Activated T-helper 2 cell treated with anti-CD3 and anti-CD28 coated beads, Interferon-gamma antibody, Interleukin-2, Interleukin-4, amounts not matched to agents 10 μg/mL and 5 μg/mL and 100 μg/mL, durations not matched to agents 14 hours and 24 hours and 36 hours (primary cell): ENCODE measurements at regions of chr1 and their contacts with region 1.

Region 1: GRCh38 chr1:192580351-192580962 is 4.9 kb downstream of the RGS1 start:
- DNase-seq: no peak
- H3K4me3 Mint-ChIP-seq: peak overlapping the region; percentile 7
- H3K27ac Mint-ChIP-seq: no peak overlapping the region
- H3K4me1 Mint-ChIP-seq: peaks cover 39% of the 10 kb centered on the region
- H3K27me3 Mint-ChIP-seq: peaks cover 8% of the 10 kb centered on the region

Region 2: DNA sequence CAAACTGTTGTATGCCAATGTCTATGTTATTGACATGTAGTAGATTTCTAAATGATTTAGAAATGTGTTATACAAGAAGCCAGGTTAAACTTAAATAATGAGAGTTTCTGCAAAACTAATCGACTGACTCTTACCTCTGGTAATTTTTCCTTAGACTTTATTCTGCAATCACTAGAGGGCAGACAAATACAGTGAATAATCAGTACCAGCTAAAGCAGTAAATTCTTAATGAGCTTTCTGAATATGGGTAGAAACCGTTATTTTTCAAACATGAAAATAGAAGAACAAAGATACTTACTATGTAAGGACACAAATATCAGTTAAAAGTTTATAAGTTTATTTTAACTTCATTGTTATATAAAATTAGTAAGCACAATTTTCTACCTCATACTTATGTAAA is 102.8 kb before region 1 on chr1:
- intact Hi-C with region 1: loop called (anchors 1 kb)
- DNase-seq: no peak
- H3K4me3 Mint-ChIP-seq: no peak overlapping the region
- H3K27ac Mint-ChIP-seq: no peak overlapping the region
- H3K4me1 Mint-ChIP-seq: peaks cover 3% of the 10 kb centered on the region
- H3K27me3 Mint-ChIP-seq: peaks cover 12% of the 10 kb centered on the region

Region 3: GRCh38 chr1:192530254-192530653 is 50.2 kb before region 1 on chr1:
- intact Hi-C with region 1: loop called (anchors 1 kb)
- DNase-seq: no peak
- H3K4me3 Mint-ChIP-seq: peak overlapping the region; percentile 9
- H3K27ac Mint-ChIP-seq: no peak overlapping the region
- H3K4me1 Mint-ChIP-seq: peaks cover 39% of the 10 kb centered on the region
- H3K27me3 Mint-ChIP-seq: peaks cover 9% of the 10 kb centered on the region

Region 4: GRCh38 chr1:192545896-192546521 is 34.4 kb before region 1 on chr1:
- intact Hi-C with region 1: loop called (anchors 1 kb)
- DNase-seq: no peak
- H3K4me3 Mint-ChIP-seq: no peak overlapping the region
- H3K27ac Mint-ChIP-seq: peak overlapping the region; percentile 1
- H3K4me1 Mint-ChIP-seq: peaks cover 64% of the 10 kb centered on the region
- H3K27me3 Mint-ChIP-seq: no peaks in the 10 kb centered on the region

Region 5: DNA sequence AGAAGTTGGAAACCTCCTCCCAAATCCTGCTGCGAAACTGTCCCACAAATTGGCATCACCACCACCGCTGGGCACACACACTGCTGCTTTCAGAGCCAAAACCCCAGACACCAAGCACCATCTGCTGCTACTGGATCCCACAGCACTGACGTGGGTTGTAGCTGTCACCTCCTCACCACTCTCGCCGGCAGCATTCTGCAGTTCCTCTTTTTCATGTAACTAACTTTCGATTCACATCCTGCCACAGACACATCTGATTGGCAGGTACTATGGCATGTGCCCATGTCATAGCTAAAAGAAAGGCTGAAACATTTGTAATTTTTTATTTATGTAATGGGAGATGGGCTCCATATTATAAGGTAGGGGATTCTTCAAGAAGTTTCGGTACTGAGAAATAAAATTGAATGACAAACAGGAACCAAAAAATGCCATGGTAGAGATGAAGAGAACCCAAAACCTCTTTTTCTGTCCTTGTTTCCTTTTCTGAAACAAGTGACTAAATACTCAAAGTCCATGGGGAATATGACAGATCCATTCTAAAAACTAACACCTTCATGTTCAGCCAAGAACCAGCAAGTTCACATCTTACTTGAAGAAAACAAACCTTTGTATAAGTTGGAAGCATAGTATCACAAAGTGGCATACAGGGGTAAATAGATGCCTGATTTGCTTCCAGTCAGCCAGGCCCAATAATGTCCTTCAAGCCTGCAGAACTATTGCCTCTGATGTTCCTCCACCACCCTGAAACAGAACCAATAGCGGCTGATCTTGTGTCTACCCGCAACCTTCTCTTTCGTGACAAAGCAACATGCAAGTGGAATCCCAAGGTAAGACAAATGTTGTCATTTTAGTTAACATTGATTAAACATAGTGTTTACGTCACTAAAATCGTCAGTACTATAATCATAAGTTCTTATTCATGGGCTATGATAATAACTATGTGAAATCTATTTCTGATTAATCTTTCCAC is 28.9 kb after region 1 on chr1:
- intact Hi-C with region 1: loop called (anchors 2 kb)
- DNase-seq: peak; percentile 46
- H3K4me3 Mint-ChIP-seq: peak overlapping the region; percentile 22
- H3K27ac Mint-ChIP-seq: no peak overlapping the region
- H3K4me1 Mint-ChIP-seq: peaks cover 12% of the 10 kb centered on the region
- H3K27me3 Mint-ChIP-seq: peaks cover 2% of the 10 kb centered on the region